Activated naive CD4-positive, alpha-beta T cell treated with anti-CD3 and anti-CD28 coated beads for 36 hours (primary cell): ENCODE measurements at regions of chr1 and their contacts with region 1.

Region 1: GRCh38 chr1:156659994-156660751 is 17.0 kb downstream of the NES start:
- DNase-seq: peak; percentile 96
- H3K4me3 Mint-ChIP-seq: peak overlapping the region; percentile 83
- H3K27ac Mint-ChIP-seq: peak overlapping the region; percentile 19
- H3K4me1 Mint-ChIP-seq: peaks cover 46% of the 10 kb centered on the region
- H3K27me3 Mint-ChIP-seq: peaks cover 29% of the 10 kb centered on the region

Region 2: GRCh38 chr1:156456622-156457465 is 203.3 kb before region 1 on chr1:
- CTCF ChIA-PET with region 1: no interaction called
- intact Hi-C with region 1: loop called (anchors 5 kb)
- DNase-seq: peak; percentile 100
- H3K4me3 Mint-ChIP-seq: peak overlapping the region; percentile 86
- H3K27ac Mint-ChIP-seq: peak overlapping the region; percentile 97
- H3K4me1 Mint-ChIP-seq: peaks cover 10% of the 10 kb centered on the region
- H3K27me3 Mint-ChIP-seq: no peaks in the 10 kb centered on the region

Region 3: DNA sequence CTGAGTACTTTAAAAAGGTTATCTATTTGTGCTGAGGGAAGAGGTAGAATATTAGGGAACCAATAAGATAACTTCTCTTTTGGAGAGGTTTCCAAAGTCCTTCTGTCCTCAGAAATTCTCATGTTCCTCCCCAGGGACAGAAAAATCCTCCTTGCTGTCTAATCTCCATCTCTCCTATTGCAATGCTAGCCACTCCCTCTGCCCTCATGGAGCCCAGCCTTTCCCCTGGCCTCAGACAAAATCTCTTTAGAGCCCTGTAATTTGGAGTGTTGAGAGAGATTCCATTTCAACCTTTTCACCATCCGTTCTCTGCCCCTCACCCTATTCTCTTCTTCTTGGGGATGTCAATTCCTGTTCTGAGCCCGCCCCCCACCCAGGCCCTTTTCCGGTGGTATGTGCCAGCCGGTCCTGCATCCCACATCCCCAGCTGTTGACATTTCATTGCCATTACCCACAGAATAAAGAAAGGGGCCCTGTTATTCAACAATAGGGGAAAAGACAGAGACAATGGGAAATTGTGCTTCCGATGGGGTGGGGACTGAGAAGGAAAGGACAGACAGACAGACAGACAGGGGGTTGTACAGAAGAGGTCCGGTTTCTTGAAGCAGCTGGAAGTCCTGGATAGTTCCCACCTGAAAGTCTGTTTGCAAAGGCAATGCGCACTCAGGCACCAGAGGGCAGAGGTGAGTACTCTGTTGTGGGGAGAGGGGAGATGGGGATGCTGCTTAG is 41.2 kb before region 1 on chr1 and contains the start of gene HAPLN2:
- CTCF ChIA-PET with region 1: interaction called, 168 read pairs
- intact Hi-C with region 1: no loop called
- DNase-seq: peak; percentile 45
- H3K4me3 Mint-ChIP-seq: no peak within 1 kb of the TSS
- H3K27ac Mint-ChIP-seq: no peak within 1 kb of the TSS
- H3K4me1 Mint-ChIP-seq: no peaks in the 10 kb centered on the region
- H3K27me3 Mint-ChIP-seq: peaks cover 40% of the 10 kb centered on the region
- total RNA-seq, gene HAPLN2: 0.40 to 0.55 TPM

Region 4: GRCh38 chr1:156641761-156642264 is 18.4 kb before region 1 on chr1 and contains the start of gene BCAN:
- CTCF ChIA-PET with region 1: interaction called, 24 read pairs
- intact Hi-C with region 1: no loop called
- DNase-seq: peak; percentile 32
- H3K4me3 Mint-ChIP-seq: peak within 1 kb of the TSS; percentile 10
- H3K27ac Mint-ChIP-seq: no peak within 1 kb of the TSS
- H3K4me1 Mint-ChIP-seq: peaks cover 16% of the 10 kb centered on the region
- H3K27me3 Mint-ChIP-seq: peaks cover 78% of the 10 kb centered on the region
- total RNA-seq, gene BCAN: not detected

Region 5: GRCh38 chr1:156677616-156678596 is 17.7 kb after region 1 on chr1:
- CTCF ChIA-PET with region 1: interaction called, 107 read pairs
- intact Hi-C with region 1: loop called (anchors 1 kb)
- DNase-seq: peak; percentile 49
- H3K4me3 Mint-ChIP-seq: no peak overlapping the region
- H3K27ac Mint-ChIP-seq: no peak overlapping the region
- H3K4me1 Mint-ChIP-seq: peaks cover 14% of the 10 kb centered on the region
- H3K27me3 Mint-ChIP-seq: peaks cover 50% of the 10 kb centered on the region

Region 6: GRCh38 chr1:156700736-156701531 is 40.8 kb after region 1 on chr1:
- CTCF ChIA-PET with region 1: interaction called, 37 read pairs
- intact Hi-C with region 1: loop called (anchors 1 kb)
- DNase-seq: no peak
- H3K4me3 Mint-ChIP-seq: no peak overlapping the region
- H3K27ac Mint-ChIP-seq: no peak overlapping the region
- H3K4me1 Mint-ChIP-seq: peaks cover 15% of the 10 kb centered on the region
- H3K27me3 Mint-ChIP-seq: peaks cover 39% of the 10 kb centered on the region

Region 7: GRCh38 chr1:156892190-156893047 is 232.2 kb after region 1 on chr1:
- CTCF ChIA-PET with region 1: interaction called, 5 read pairs
- intact Hi-C with region 1: loop called (anchors 1 kb)
- DNase-seq: peak; percentile 92
- H3K4me3 Mint-ChIP-seq: peak overlapping the region; percentile 41
- H3K27ac Mint-ChIP-seq: no peak overlapping the region
- H3K4me1 Mint-ChIP-seq: peaks cover 11% of the 10 kb centered on the region
- H3K27me3 Mint-ChIP-seq: peaks cover 47% of the 10 kb centered on the region